PC-9 (cell line): ENCODE measurements at regions of chr6 and their contacts with region 1.

Region 1: DNA sequence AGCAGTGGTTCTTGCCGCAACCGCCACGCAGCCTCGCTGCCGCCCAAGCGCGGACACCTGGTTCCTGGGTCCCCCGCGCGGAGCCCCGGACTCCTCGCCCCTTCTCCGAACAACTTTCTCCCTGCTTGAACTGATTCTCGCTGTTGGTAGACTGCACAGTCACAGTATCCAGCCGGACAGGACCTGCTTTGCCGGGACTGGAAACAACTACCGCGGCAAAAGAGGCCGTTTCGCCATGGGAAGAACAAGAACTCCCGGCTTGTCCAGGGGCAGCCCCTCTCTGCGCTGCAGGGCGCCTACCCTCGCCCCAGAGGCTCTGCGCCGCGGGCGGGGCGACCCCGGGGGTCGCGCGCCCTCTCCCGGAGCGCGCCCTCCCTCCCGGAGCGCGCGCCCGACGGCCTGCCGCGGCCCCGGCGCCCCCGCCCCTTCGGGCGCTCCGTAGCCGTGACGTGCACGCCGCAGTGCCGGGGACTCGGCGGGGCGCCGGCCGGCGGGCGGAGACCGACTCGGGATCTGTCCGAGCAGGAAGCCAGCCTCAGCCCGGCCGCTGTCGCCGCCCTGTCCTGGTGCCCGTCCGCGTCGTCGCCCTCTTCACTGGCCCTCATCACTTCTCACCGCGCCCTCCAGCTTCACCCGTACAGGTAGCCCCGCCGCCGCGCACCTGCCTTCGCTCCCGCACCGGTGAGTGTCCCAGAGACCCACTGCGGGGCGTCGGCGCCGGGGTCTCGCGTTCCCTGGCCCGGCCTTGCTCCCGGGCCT is at the start of gene MYO6:
- DNase-seq: peak; percentile 53 to 86
- H3K4me3 ChIP-seq: peak within 1 kb of the TSS; percentile 88
- H3K27ac ChIP-seq: peak within 1 kb of the TSS; percentile 93
- H3K4me1 ChIP-seq: peaks cover 51% of the 10 kb centered on the region
- H3K27me3 ChIP-seq: no peaks in the 10 kb centered on the region
- CTCF ChIP-seq: no peak
- total RNA-seq, gene MYO6: 93.0 and 98.2 TPM in 2 replicates

Region 2: DNA sequence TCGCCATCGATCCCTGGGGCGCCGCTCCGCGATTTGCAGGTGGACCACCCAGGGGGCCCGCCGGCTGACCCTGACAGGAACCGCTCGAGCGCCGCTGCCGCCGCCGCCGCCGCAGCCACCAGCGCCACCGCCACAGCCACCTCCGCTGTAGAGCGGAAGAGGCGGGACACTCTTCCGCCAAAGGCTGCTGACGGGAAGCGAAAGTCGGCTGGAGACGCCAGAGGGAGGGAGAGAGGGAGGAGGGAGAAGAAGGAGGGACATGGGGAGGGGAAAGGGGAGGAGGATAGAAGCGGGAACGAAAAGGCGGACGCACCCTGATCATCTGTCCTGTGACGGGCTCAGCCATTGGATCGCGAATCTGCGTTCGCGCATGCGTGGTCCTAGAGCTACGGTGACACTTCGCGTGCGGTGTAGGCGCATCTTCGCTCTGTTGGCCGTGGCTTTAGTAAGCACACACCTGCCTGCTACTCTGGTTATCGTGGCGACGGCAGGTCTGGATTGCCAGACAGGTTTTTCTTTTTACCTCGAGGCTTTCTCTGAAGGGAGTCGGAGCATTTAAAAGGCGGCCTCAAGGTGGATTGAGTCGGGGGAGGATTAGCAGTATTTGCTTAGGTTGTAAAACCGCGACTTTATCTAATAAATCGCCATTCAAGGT is 464.2 kb before region 1 on chr6 and contains the start of gene TMEM30A:
- CTCF ChIA-PET with region 1: no interaction called
- POLR2A ChIA-PET with region 1: no interaction called
- intact Hi-C with region 1: loop called (anchors 5 kb)
- DNase-seq: peak; percentile 97 to 98
- H3K4me3 ChIP-seq: peak within 1 kb of the TSS; percentile 95
- H3K27ac ChIP-seq: peak within 1 kb of the TSS; percentile 85
- H3K4me1 ChIP-seq: peaks cover 54% of the 10 kb centered on the region
- H3K27me3 ChIP-seq: no peaks in the 10 kb centered on the region
- CTCF ChIP-seq: 0 out of 2 replicates have a peak, but pooled peaks have one; percentile 3
- total RNA-seq, gene TMEM30A: 78.2 and 122 TPM in 2 replicates

Region 3: DNA sequence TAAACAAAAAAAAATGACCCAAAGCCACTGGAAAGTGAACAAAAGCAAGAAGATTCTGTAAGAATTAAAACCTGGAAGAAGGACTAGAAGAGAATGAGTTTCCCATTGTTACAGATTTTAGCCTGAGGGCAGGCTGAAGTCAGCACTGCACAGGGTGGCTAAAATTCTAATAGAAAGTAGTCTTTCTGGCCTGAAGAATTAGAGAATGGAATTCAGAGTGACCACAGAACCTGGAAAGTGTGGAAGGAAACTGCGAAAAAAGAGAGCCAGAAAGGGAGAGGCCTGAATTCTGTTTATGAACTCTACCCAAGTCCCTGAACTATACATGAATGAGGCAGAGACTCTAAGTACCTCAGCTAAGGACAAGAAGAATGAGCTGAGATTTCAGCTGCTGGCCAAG is 216.4 kb before region 1 on chr6:
- CTCF ChIA-PET with region 1: no interaction called
- POLR2A ChIA-PET with region 1: no interaction called
- intact Hi-C with region 1: loop called (anchors 2 kb)
- DNase-seq: peak; percentile 57 to 58
- H3K4me3 ChIP-seq: no peak overlapping the region
- H3K27ac ChIP-seq: no peak overlapping the region
- H3K4me1 ChIP-seq: peaks cover 10% of the 10 kb centered on the region
- H3K27me3 ChIP-seq: no peaks in the 10 kb centered on the region
- CTCF ChIP-seq: no peak

Region 4: DNA sequence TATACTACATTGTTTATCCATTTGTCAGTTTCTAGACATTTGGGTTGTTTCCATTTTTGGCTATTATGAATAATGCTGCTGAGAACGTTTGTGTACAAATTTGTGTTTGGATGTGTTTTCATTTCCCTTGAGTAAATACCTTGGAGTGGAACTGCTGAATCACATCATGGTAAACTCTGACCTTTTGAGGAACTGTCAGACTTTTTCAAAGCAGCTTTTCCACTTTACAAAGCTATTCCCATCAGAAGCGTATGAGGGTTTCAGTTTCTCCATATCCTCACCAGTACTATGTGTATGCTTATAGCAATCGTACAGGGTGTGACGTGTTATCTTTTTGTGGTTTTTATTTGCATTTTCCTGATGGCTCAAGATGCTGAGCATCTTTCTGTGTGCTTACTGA is 103.8 kb after region 1 on chr6:
- CTCF ChIA-PET with region 1: no interaction called
- POLR2A ChIA-PET with region 1: no interaction called
- intact Hi-C with region 1: loop called (anchors 5 kb)
- DNase-seq: peak in 1 of 2 experiments; percentile 51
- H3K4me3 ChIP-seq: no peak overlapping the region
- H3K27ac ChIP-seq: peak overlapping the region; percentile 37
- H3K4me1 ChIP-seq: peaks cover 52% of the 10 kb centered on the region
- H3K27me3 ChIP-seq: no peaks in the 10 kb centered on the region
- CTCF ChIP-seq: no peak

Region 5: GRCh38 chr6:75882734-75883133 is 133.8 kb after region 1 on chr6:
- CTCF ChIA-PET with region 1: no interaction called
- POLR2A ChIA-PET with region 1: interaction called, 47 read pairs
- intact Hi-C with region 1: no loop called
- DNase-seq: peak in 1 of 2 experiments; percentile 43
- H3K4me3 ChIP-seq: no peak overlapping the region
- H3K27ac ChIP-seq: no peak overlapping the region
- H3K4me1 ChIP-seq: peaks cover 11% of the 10 kb centered on the region
- H3K27me3 ChIP-seq: no peaks in the 10 kb centered on the region
- CTCF ChIP-seq: no peak